ENCODE measurements at regions of chr16 and their contacts with region 1.

Region 1: DNA sequence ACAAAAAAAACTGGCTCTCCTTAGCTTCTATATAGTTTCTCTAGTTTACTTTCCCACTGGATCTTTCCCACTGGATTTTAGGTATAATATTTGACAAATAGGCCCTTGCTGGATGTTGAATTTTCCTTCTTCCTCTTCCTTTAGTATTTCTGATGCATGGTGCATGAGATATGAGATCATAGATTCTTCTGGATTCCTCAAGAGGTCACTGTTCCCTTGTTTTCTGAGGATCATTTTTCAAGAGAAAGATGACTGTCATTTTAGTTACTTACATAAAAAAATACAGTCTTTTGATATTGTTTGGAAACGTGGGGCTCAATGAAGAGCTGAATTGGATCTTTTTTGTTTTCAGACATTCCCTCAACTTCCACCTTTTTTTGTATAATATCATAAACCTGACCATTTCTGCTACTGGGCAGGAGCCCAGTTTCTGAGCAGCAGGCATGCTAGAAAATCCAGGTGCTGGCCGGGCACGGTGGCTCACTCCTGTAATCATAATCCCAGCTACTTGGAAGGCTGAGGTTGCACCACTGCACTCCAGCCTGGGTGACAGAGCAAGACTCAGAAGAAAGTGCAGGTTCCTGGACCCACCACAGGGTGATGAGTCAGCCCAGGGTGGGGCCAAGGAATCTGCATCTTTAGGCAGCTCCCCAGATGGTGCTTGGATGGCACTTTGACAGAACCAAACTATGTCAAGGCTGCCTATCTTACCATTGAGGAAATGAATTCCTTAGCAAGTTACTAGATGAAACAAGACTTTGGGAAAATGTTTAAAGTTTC is 70.3 kb downstream of the SDR42E1 start:
- DNase-seq: peak; percentile 17
- H3K4me3 ChIP-seq: no peak overlapping the region
- CTCF ChIP-seq: peak; percentile 31

Region 2: GRCh38 chr16:82027629-82028064 is 86.7 kb after region 1 on chr16:
- CTCF ChIA-PET with region 1: no interaction called
- POLR2A ChIA-PET with region 1: no interaction called
- DNase-seq: no peak
- H3K4me3 ChIP-seq: no peak overlapping the region
- CTCF ChIP-seq: no peak

Region 3: DNA sequence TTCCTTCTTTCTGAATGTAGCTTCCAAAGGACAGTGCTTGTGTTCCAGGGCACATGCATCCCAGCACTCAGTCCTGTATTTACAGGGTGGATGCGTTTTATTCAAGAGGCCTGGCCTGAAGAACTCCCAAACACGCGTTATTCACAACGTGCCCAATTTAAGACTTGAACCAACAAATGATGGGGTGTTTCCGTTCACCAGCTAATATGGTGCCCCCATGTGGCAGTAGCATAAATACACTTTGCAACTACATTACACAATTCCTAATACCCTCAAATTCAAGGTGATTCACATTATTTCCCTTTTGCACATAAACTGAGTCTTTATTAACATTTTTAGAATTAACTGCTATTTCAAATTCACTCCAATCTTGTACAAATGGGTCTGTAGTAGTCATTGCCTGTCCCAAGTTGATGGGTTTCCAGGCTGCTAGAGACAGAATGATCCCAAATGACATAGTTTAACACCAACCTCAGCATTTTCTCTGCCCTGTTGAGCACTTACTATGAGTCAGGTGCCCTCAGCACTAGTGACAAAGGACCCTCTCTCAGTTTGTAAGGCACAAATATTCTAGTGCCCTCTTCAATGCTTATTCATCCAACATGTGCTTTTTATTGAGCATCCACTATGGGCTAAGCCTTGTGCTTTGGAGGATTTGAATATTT is 121.0 kb after region 1 on chr16:
- CTCF ChIA-PET with region 1: interaction called, 12 read pairs
- POLR2A ChIA-PET with region 1: no interaction called
- DNase-seq: no peak
- H3K4me3 ChIP-seq: no peak overlapping the region
- CTCF ChIP-seq: peak; percentile 30